A549 (cell line): ENCODE measurements at regions of chr22 and their contacts with region 1.

Region 1: DNA sequence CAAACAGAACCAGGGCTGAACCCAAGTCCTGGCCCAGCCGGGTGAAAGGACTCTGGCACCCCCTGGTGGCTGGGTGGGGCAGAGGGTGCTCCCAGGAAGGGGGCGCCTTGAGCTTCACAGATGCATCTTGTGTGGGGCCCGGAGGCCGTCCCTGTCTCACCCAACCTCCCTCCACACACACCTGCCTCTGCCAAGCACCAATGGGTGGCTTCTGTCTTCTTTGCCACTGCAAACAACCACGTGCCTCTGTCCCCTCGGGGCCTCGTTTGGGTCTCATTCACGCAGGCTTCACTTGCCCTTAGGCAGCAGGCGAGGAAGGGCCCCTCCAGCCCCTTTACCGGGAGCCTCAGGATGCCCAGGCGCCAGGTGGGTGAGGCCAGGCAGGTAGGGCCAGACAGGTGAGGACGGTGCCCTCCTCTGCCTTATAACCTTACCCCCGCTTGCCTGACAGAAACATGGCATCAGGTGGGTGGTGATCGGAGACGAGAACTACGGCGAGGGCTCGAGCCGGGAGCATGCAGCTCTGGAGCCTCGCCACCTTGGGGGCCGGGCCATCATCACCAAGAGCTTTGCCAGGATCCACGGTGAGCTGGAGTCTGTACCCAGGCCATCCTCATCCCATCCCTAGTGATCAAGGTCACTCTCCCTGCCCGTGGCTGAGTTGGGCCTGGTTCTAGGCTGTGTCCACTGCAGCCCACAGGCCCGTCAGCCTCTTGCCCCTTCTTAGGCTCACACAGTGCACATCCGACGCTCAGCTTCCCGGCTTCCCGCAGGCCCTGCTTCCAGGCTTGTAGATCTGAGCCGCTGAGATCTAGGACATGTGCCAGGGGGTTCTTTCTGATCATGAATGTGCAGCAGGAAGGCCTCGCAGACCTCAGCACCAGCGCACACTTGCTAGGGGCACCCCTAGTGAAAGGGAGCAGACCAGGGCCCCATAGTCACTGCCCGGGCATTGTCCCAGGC is 17.2 kb downstream of the POLR3H start:
- DNase-seq: peak; percentile 36 to 66
- ATAC-seq: peak; percentile 54 to 71
- H3K4me3 ChIP-seq: no peak overlapping the region
- H3K27ac ChIP-seq: no peak overlapping the region
- H3K4me1 ChIP-seq: no peaks in the 10 kb centered on the region
- CTCF ChIP-seq: peak; percentile 68
- EP300 ChIP-seq: no peak
- POLR2A ChIP-seq: no peak
- RAD21 ChIP-seq: peak; percentile 49 to 50

Region 2: GRCh38 chr22:41543854-41544670 is 16.9 kb after region 1 on chr22 and contains the start of gene POLR3H:
- CTCF ChIA-PET with region 1: interaction called, 11 read pairs
- POLR2A ChIA-PET with region 1: no interaction called
- DNase-seq: peak; percentile 82 to 93
- ATAC-seq: peak; percentile 93 to 97
- H3K4me3 ChIP-seq: peak within 1 kb of the TSS; percentile 98
- H3K27ac ChIP-seq: peak within 1 kb of the TSS; percentile 94 to 99
- H3K4me1 ChIP-seq: peaks cover 20% of the 10 kb centered on the region
- CTCF ChIP-seq: peak; percentile 70
- EP300 ChIP-seq: no peak
- POLR2A ChIP-seq: peak; percentile 78
- RAD21 ChIP-seq: peak; percentile 52 to 55
- polyA plus RNA-seq, gene POLR3H: 24.5 and 26.0 TPM in 2 replicates